Gastrocnemius medialis (tissue), 4 donors: ENCODE measurements at regions of chr7 and their contacts with region 1.

Region 1: DNA sequence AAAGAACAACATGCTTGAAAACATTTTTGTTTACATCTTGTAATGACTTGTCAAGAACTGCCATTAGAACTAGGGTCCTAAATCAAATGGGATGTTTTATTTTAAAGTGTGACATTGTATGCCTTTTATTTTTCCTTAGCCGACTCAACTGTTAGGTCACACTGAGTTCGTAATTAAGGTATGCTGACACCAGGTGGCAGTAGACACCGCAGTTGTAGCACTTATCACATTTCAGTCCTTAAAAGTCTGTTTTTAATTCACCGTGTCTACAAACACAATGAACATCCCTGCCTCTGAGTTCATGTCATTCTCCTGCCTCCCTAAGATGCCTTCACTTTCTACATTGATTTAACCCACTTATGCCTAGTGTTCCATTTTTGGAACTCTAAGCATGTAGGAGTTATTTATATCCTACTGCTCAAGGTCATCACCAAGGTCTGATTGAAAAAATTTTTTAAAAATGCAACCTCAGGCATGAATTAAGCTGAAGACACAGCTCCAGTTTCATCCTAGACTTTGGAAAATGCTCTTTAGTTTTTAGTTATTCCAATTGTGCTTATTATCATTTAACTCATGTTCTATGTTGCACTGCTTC is 186.1 kb downstream of the BMPER start:
- DNase-seq: peak in 1 of 2 donors; percentile 61
- ATAC-seq: peak; percentile 39 to 41
- H3K4me3 ChIP-seq: no peak overlapping the region
- H3K27ac ChIP-seq: no peak overlapping the region
- H3K4me1 ChIP-seq: peaks cover 18 to 22% of the 10 kb centered on the region in 2 donors
- H3K27me3 ChIP-seq: no peaks in the 10 kb centered on the region
- CTCF ChIP-seq: peak; percentile 61 to 73 (median 69)
- POLR2A ChIP-seq: no peak

Region 2: DNA sequence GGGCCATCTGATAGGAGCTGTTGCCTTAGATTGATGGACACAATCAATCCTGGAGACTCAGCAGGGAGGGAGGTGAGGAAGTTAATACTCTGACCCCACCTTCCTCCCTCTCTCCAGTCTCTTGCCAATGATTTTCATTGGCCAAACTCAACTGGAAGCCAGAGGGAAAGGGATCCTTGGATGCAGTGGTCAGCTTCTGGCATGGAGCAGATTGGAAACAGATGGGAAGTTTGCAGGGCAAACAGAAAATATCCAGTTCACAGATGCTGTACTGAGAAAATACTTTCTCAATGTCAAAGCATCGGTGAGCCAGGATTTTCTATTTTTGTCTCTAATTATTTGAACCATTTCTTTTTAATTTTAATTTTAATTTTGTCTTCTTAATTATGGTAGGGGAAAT is 791.3 kb before region 1 on chr7:
- in situ Hi-C with region 1: no loop called
- intact Hi-C with region 1: no loop called
- DNase-seq: no peak
- ATAC-seq: no peak
- H3K4me3 ChIP-seq: no peak overlapping the region
- H3K27ac ChIP-seq: no peak overlapping the region
- H3K4me1 ChIP-seq: no peaks in the 10 kb centered on the region
- H3K27me3 ChIP-seq: no peaks in the 10 kb centered on the region
- CTCF ChIP-seq: no peak
- POLR2A ChIP-seq: no peak

Region 3: DNA sequence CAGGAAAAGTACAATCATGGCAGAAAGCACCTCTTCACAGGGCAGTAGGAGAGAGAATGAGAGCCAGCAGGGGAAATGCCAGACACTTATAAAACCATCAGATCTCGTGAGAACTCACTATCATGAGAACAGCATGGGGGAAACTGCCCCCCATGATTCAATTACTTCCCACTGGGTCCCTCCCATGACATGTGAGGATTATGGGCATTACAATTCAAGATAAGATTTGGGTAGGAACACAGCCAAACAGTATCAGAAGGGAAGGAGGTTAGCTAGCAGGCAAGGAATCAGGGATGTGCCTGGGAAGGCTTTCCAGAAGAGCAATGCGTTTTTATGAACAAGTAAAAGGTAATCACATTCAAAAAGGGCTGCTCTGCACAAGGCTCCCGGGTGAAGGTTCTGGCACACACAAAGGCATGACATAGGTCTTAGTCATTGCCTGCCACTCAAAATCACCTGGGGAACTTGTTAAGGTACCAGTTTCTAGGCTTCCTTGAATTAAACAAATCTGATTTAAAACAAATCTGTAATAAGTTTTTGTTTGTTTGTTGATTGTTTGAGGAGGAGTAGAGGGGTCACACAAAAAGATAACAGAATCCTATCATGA is 145.2 kb before region 1 on chr7:
- in situ Hi-C with region 1: no loop called
- intact Hi-C with region 1: no loop called
- DNase-seq: no peak
- ATAC-seq: no peak
- H3K4me3 ChIP-seq: no peak overlapping the region
- H3K27ac ChIP-seq: no peak overlapping the region
- H3K4me1 ChIP-seq: no peaks in the 10 kb centered on the region
- H3K27me3 ChIP-seq: no peaks in the 10 kb centered on the region
- CTCF ChIP-seq: no peak
- POLR2A ChIP-seq: no peak

Region 4: DNA sequence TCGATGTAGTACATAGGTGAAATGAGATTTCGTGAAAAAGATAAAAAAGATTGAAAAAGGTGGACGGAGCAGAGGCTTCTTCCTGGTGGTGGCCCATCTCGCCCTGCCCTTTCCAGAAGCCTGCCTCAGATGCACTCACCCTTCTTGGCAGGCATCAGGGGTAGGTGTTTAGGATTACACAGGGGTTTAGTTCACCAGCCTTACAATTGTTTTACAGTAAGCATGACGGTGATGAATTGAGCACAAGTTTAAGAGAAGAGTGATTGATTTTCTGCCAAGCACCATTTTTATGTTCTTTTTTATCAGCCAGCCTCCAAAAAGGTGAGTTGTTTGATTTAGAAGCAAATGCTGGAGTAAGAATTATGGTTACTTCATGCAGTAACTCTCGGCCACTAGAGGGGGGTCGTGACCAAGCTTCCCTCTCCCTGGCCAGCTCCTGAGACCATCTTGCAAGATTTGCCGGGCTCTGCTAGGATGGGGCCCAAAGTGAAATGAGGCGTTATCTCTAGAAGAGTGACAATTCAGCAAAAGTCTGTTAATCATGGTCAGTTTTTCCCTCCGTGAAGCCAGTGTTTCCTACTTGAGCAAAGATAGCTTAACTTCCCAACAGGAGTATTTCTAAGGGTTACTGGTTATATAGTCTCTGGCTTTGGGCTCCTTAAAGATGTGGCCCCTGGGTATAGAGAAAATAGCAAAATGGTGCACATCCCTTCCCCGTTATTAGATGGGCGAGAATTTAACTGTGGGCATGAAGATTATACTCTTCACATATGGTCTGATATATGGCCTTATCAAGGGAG is 42.8 kb after region 1 on chr7:
- in situ Hi-C with region 1: no loop called
- intact Hi-C with region 1: loop called (anchors 1 kb)
- DNase-seq: peak; percentile 63 to 72
- ATAC-seq: peak; percentile 75 to 87
- H3K4me3 ChIP-seq: no peak overlapping the region
- H3K27ac ChIP-seq: peak overlapping the region in 1 of 4 donors; percentile 3
- H3K4me1 ChIP-seq: peaks cover 11 to 22% of the 10 kb centered on the region in 2 donors
- H3K27me3 ChIP-seq: no peaks in the 10 kb centered on the region
- CTCF ChIP-seq: peak; percentile 76 to 82 (median 78)
- POLR2A ChIP-seq: no peak

Region 5: GRCh38 chr7:34158368-34159155 is 67.1 kb after region 1 on chr7:
- in situ Hi-C with region 1: loop called in 1 of 4 experiments (anchors 10 kb)
- intact Hi-C with region 1: loop called (anchors 2 kb)
- DNase-seq: peak; percentile 86 to 90
- ATAC-seq: peak; percentile 81 to 85
- H3K4me3 ChIP-seq: no peak overlapping the region
- H3K27ac ChIP-seq: peak overlapping the region; percentile 74 to 83 (median 78)
- H3K4me1 ChIP-seq: peaks cover 41 to 53% of the 10 kb centered on the region in 2 donors
- H3K27me3 ChIP-seq: no peaks in the 10 kb centered on the region
- CTCF ChIP-seq: peak; percentile 32 to 60 (median 46)
- POLR2A ChIP-seq: no peak

Region 6: DNA sequence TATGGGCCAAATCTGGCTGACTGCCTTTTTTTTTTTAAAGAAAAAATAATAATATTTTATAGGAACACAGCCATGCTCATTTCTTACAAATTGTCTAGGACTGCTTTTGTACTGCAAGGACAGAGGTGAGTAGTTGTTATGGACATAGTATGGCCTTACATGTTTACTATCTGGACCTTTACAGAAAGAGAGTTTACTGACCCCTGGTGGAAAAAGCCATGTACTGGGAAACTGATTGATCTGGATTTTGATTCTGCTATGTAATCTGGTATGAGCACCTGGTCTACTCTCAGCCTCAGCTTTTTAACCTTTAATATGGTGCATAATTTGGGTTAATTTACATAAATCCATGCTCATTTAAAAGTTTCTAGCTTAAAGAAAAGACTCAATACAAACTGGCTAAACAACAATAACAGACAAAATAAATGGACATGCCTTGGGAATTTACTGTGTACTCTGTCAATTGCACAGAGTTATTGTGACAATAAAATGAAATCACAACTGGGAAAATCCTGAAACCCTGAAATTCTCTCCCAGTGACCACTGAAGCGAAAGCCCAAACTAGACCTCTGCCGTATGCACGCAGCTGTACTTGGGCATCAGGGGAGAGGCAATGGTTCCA is 74.6 kb after region 1 on chr7:
- in situ Hi-C with region 1: no loop called
- intact Hi-C with region 1: loop called (anchors 1 kb)
- DNase-seq: no peak
- ATAC-seq: peak; percentile 68 to 79
- H3K4me3 ChIP-seq: no peak overlapping the region
- H3K27ac ChIP-seq: peak overlapping the region; percentile 79 to 92 (median 87)
- H3K4me1 ChIP-seq: peaks cover 16 to 21% of the 10 kb centered on the region in 2 donors
- H3K27me3 ChIP-seq: no peaks in the 10 kb centered on the region
- CTCF ChIP-seq: peak; percentile 72 to 89 (median 78)
- POLR2A ChIP-seq: no peak

Region 7: GRCh38 chr7:34198231-34198641 is 106.8 kb after region 1 on chr7:
- in situ Hi-C with region 1: no loop called
- intact Hi-C with region 1: loop called (anchors 5 kb)
- DNase-seq: peak; percentile 74 to 76
- ATAC-seq: peak; percentile 97 to 99
- H3K4me3 ChIP-seq: no peak overlapping the region
- H3K27ac ChIP-seq: peak overlapping the region; percentile 80 to 91 (median 82)
- H3K4me1 ChIP-seq: peaks cover 11 to 28% of the 10 kb centered on the region in 2 donors
- H3K27me3 ChIP-seq: no peaks in the 10 kb centered on the region
- CTCF ChIP-seq: no peak
- POLR2A ChIP-seq: no peak

Region 8: GRCh38 chr7:34321000-34321581 is 229.7 kb after region 1 on chr7:
- in situ Hi-C with region 1: no loop called
- intact Hi-C with region 1: loop called (anchors 5 kb)
- DNase-seq: peak; percentile 10 to 37
- ATAC-seq: peak; percentile 85 to 91
- H3K4me3 ChIP-seq: no peak overlapping the region
- H3K27ac ChIP-seq: no peak overlapping the region
- H3K4me1 ChIP-seq: no peaks in the 10 kb centered on the region
- H3K27me3 ChIP-seq: no peaks in the 10 kb centered on the region
- CTCF ChIP-seq: peak; percentile 33 to 81 (median 60)
- POLR2A ChIP-seq: no peak